ENCODE measurements at regions of chr1 and their contacts with region 1.

Region 1: DNA sequence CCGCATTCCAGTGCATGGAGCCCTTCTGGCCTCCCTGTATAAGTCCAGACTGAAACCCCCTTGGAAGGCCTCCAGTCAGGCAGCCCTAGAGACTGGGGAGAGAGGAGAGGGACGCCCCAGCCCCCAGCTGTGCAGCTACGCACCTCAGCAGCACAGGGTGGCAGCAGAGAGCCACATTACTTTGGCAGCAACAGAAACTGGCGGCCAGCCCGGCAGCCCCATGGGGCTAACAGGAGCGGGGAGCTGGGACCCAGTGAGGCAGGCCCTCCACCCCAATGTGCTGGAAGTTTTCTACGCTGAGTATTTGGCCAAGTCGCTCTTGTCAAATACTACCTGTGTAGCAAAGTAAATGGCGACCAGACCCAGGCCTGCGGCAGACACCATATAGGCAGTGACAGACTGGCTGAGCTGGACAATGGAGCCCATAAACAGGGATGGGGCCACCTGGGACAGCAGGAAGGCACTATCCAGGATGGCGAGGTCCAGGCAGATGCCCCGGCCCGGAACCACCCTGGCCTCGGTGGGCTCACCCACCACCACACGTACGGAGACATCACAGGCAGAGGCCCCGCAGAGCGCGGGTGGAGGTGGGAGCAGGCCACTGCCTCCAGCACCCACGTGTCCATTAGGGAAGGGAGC is 21.2 kb downstream of the SLC45A3 start:
- DNase-seq: peak; percentile 69 to 81 (median 75)
- H3K4me3 ChIP-seq: no peak overlapping the region
- H3K27ac ChIP-seq: no peak overlapping the region
- H3K4me1 ChIP-seq: peaks cover 0 to 27% (median 23%) of the 10 kb centered on the region in 4 experiments
- H3K27me3 ChIP-seq: no peaks in the 10 kb centered on the region

Region 2: GRCh38 chr1:205523891-205524793 is 134.9 kb before region 1 on chr1:
- CTCF ChIA-PET with region 1: interaction called, 68 read pairs
- POLR2A ChIA-PET with region 1: no interaction called
- DNase-seq: peak; percentile 56 to 82 (median 71)
- H3K4me3 ChIP-seq: no peak overlapping the region
- H3K27ac ChIP-seq: no peak overlapping the region
- H3K4me1 ChIP-seq: peaks cover 0 to 10% (median 3%) of the 10 kb centered on the region in 4 experiments
- H3K27me3 ChIP-seq: no peaks in the 10 kb centered on the region

Region 3: GRCh38 chr1:205591522-205592351 is 67.3 kb before region 1 on chr1:
- CTCF ChIA-PET with region 1: interaction called, 253 read pairs
- POLR2A ChIA-PET with region 1: interaction called, 7 read pairs
- DNase-seq: peak; percentile 82 to 88 (median 87)
- H3K4me3 ChIP-seq: peak overlapping the region; percentile 0 to 78 (median 65)
- H3K27ac ChIP-seq: peak overlapping the region in 1 of 2 experiments; percentile 50
- H3K4me1 ChIP-seq: peaks cover 3 to 31% (median 19%) of the 10 kb centered on the region in 4 experiments
- H3K27me3 ChIP-seq: no peaks in the 10 kb centered on the region

Region 4: GRCh38 chr1:205610036-205610435 is 49.0 kb before region 1 on chr1:
- CTCF ChIA-PET with region 1: no interaction called
- POLR2A ChIA-PET with region 1: no interaction called
- DNase-seq: no peak
- H3K4me3 ChIP-seq: no peak overlapping the region
- H3K27ac ChIP-seq: no peak overlapping the region
- H3K4me1 ChIP-seq: peaks cover 4 to 16% (median 8%) of the 10 kb centered on the region in 4 experiments
- H3K27me3 ChIP-seq: no peaks in the 10 kb centered on the region

Region 5: GRCh38 chr1:205680073-205680851 is 21.2 kb after region 1 on chr1 and contains the start of gene SLC45A3:
- CTCF ChIA-PET with region 1: interaction called, 131 read pairs
- POLR2A ChIA-PET with region 1: interaction called, 3 read pairs
- DNase-seq: peak; percentile 38 to 78 (median 73)
- H3K4me3 ChIP-seq: peak within 1 kb of the TSS; percentile 42 to 86 (median 81)
- H3K27ac ChIP-seq: peak within 1 kb of the TSS; percentile 25 to 81
- H3K4me1 ChIP-seq: peaks cover 15 to 56% (median 49%) of the 10 kb centered on the region in 4 experiments
- H3K27me3 ChIP-seq: no peaks in the 10 kb centered on the region

Region 6: DNA sequence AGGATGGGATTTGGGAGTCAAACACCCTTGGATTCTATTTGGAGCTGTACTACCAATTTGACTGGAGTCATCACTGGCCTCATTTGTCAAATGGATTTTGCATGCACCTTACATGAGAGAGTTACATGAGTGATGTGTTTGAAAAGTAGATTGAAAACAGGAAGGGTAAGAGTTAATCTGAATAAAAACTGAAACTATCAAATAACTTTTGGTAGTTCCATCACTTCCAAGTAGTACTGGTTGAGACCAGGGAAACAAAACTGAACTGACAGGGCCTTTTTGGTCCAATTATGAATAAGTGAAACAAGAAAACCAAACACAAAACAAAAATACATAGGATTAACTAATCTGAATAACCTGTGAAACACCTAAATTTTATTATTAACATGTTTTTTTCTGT is 60.7 kb after region 1 on chr1:
- CTCF ChIA-PET with region 1: interaction called, 1,013 read pairs
- POLR2A ChIA-PET with region 1: no interaction called
- DNase-seq: no peak
- H3K4me3 ChIP-seq: no peak overlapping the region
- H3K27ac ChIP-seq: no peak overlapping the region
- H3K4me1 ChIP-seq: peaks cover 4 to 7% (median 5%) of the 10 kb centered on the region in 4 experiments
- H3K27me3 ChIP-seq: no peaks in the 10 kb centered on the region

Region 7: GRCh38 chr1:205791568-205792180 is 132.6 kb after region 1 on chr1:
- CTCF ChIA-PET with region 1: interaction called, 12 read pairs
- POLR2A ChIA-PET with region 1: no interaction called
- DNase-seq: peak; percentile 50 to 75 (median 66)
- H3K4me3 ChIP-seq: no peak overlapping the region
- H3K27ac ChIP-seq: no peak overlapping the region
- H3K4me1 ChIP-seq: no peaks in the 10 kb centered on the region
- H3K27me3 ChIP-seq: no peaks in the 10 kb centered on the region